Transverse colon (tissue), 4 donors: ENCODE measurements at regions of chr22 and their contacts with region 1.

Region 1: GRCh38 chr22:38872172-38872830 is at the start of gene CBX6:
- DNase-seq: peak; percentile 93
- H3K4me3 ChIP-seq: peak within 1 kb of the TSS; percentile 54 to 71 (median 64)
- H3K27ac ChIP-seq: peak within 1 kb of the TSS; percentile 88 to 95 (median 90)
- H3K4me1 ChIP-seq: peaks cover 14 to 38% (median 21%) of the 10 kb centered on the region in 4 donors
- H3K27me3 ChIP-seq: peaks cover 36% of the 10 kb centered on the region
- CTCF ChIP-seq: no peak
- EP300 ChIP-seq: no peak
- POLR2A ChIP-seq: no peak
- total RNA-seq, gene CBX6: 14.5 to 42.6 (median 22.1) TPM

Region 2: GRCh38 chr22:38766076-38766777 is 106.1 kb before region 1 on chr22:
- in situ Hi-C with region 1: no loop called
- intact Hi-C with region 1: loop called (anchors 10 kb)
- DNase-seq: peak; percentile 78
- H3K4me3 ChIP-seq: no peak overlapping the region
- H3K27ac ChIP-seq: no peak overlapping the region
- H3K4me1 ChIP-seq: peaks cover 0 to 3% (median 0%) of the 10 kb centered on the region in 4 donors
- H3K27me3 ChIP-seq: no peaks in the 10 kb centered on the region
- CTCF ChIP-seq: peak; percentile 66 to 77 (median 73)
- EP300 ChIP-seq: no peak
- POLR2A ChIP-seq: no peak

Region 3: GRCh38 chr22:38981992-38982927 is 110.0 kb after region 1 on chr22 and contains the start of gene APOBEC3B:
- in situ Hi-C with region 1: no loop called
- intact Hi-C with region 1: loop called (anchors 5 kb)
- DNase-seq: peak; percentile 92
- H3K4me3 ChIP-seq: peak within 1 kb of the TSS in 3 of 4 donors; percentile 1 to 52 (median 23)
- H3K27ac ChIP-seq: peak within 1 kb of the TSS in 3 of 4 donors; percentile 83 to 87 (median 84)
- H3K4me1 ChIP-seq: peaks cover 0 to 28% (median 13%) of the 10 kb centered on the region in 4 donors
- H3K27me3 ChIP-seq: no peaks in the 10 kb centered on the region
- CTCF ChIP-seq: no peak
- EP300 ChIP-seq: no peak
- POLR2A ChIP-seq: peak; percentile 53
- total RNA-seq, gene APOBEC3B: 7.8 to 15.3 (median 10.9) TPM in 3 of 4 donors, not detected in the other

Region 4: DNA sequence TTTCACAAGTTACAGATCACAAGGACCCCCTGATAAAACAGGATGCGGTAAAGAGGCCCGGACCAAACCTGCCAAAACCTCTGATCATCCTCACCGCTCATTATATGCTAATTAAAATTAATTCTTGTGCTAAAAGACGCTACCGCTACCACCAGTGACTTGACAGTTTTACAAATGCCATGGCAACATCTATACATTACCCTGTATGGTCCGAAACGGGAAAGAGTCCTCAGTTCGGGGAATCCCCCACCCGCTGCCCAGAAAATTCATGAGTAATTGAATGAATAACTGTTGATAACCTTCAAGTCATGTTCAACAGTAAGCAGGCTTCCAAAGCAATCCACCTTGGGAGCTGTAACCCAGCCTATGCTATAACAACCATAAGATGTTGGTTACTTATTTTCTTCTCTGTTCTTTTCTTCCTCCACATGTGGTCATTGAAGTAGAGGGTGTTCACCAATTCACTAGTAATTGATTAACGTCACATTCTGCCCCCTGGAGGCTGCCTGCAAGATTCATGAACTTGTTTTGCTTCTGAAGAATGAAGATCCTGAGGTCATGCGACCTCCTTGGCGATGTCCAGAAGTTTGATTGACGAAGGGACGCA is 245.4 kb after region 1 on chr22:
- in situ Hi-C with region 1: loop called in 3 of 4 experiments (anchors 10 to 25 kb)
- intact Hi-C with region 1: no loop called
- DNase-seq: peak; percentile 81
- H3K4me3 ChIP-seq: no peak overlapping the region
- H3K27ac ChIP-seq: no peak overlapping the region
- H3K4me1 ChIP-seq: peaks cover 0 to 3% (median 0%) of the 10 kb centered on the region in 4 donors
- H3K27me3 ChIP-seq: peaks cover 23% of the 10 kb centered on the region
- CTCF ChIP-seq: peak; percentile 36 to 55 (median 40)
- EP300 ChIP-seq: no peak
- POLR2A ChIP-seq: no peak

Region 5: GRCh38 chr22:39135090-39135896 is 263.0 kb after region 1 on chr22:
- in situ Hi-C with region 1: no loop called
- intact Hi-C with region 1: loop called (anchors 10 kb)
- DNase-seq: peak; percentile 44
- H3K4me3 ChIP-seq: no peak overlapping the region
- H3K27ac ChIP-seq: peak overlapping the region in 1 of 4 donors; percentile 10
- H3K4me1 ChIP-seq: peaks cover 9 to 17% (median 16%) of the 10 kb centered on the region in 4 donors
- H3K27me3 ChIP-seq: no peaks in the 10 kb centered on the region
- CTCF ChIP-seq: peak in 4 of 5 experiments; percentile 24 to 33 (median 28)
- EP300 ChIP-seq: no peak
- POLR2A ChIP-seq: no peak